OCI-LY7 (cell line): ENCODE measurements at regions of chr18 and their contacts with region 1.

Region 1: GRCh38 chr18:31637445-31637844 is 45.8 kb downstream of the TTR start:
- DNase-seq: no peak
- H3K4me3 ChIP-seq: no peak overlapping the region
- H3K27ac ChIP-seq: no peak overlapping the region
- H3K4me1 ChIP-seq: no peaks in the 10 kb centered on the region
- CTCF ChIP-seq: no peak

Region 2: DNA sequence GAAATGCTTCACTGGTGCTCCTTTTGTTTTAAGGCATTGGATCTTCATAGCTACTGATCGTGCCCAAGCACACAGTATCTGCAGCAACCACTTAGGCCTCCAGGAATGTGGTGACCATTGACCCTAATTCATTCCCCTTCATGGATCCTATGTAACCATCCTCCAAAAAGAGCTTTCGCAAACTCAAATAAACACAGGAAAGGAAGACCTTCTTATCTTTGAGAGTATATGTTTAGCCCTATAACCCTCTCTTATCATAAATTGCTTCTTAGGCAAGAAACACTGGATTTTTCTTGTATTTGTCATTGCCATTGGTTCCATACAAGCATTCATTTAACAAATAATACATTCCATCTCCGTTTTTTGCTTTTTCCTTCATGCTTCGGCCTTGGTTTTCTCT is 49.9 kb before region 1 on chr18:
- CTCF ChIA-PET with region 1: no interaction called
- POLR2A ChIA-PET with region 1: interaction called, 4 read pairs
- intact Hi-C with region 1: loop called (anchors 5 kb)
- DNase-seq: no peak
- H3K4me3 ChIP-seq: no peak overlapping the region
- H3K27ac ChIP-seq: no peak overlapping the region
- H3K4me1 ChIP-seq: peaks cover 10% of the 10 kb centered on the region
- CTCF ChIP-seq: no peak